GM10248 (cell line): ENCODE measurements at regions of chr19 and their contacts with region 1.

Region 1: GRCh38 chr19:49497047-49497788 is 984 bp downstream of the RPS11 start:
- DNase-seq: peak; percentile 56
- CTCF ChIP-seq: no peak

Region 2: DNA sequence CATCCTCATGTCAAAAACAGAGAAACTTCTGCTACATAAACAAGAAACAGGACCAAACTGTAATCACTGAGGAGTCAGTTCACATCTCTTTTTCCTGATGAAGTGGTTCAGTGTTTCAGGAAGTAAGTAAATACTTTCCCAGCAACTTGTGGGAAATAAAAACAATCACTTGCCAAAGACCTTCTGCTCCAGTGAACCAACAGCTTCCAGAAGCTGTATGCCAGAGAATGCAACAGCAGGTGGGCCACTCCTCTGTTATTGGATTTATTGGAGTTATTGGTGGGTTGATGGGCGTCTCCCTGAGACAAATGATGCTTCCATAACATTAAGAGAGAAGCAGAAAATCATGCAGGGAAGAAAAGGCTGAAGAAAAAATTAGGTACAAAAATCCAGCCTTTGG is 182.1 kb before region 1 on chr19:
- CTCF ChIA-PET with region 1: no interaction called
- POLR2A ChIA-PET with region 1: no interaction called
- DNase-seq: no peak
- CTCF ChIP-seq: no peak

Region 3: GRCh38 chr19:49451430-49452181 is 45.6 kb before region 1 on chr19 and contains the start of gene PIH1D1:
- CTCF ChIA-PET with region 1: no interaction called
- POLR2A ChIA-PET with region 1: interaction called, 11 read pairs
- DNase-seq: peak; percentile 92
- CTCF ChIP-seq: no peak

Region 4: GRCh38 chr19:49593233-49594113 is 96.3 kb after region 1 on chr19:
- CTCF ChIA-PET with region 1: no interaction called
- POLR2A ChIA-PET with region 1: no interaction called
- DNase-seq: peak; percentile 100
- CTCF ChIP-seq: no peak